ENCODE measurements at regions of chr17 and their contacts with region 1.

Region 1: GRCh38 chr17:6913608-6914443 is 82.0 kb upstream of the ALOX12 start:
- DNase-seq: no peak
- H3K4me3 ChIP-seq: no peak overlapping the region
- H3K27me3 ChIP-seq: peaks cover 9% of the 10 kb centered on the region
- CTCF ChIP-seq: peak; percentile 80

Region 2: DNA sequence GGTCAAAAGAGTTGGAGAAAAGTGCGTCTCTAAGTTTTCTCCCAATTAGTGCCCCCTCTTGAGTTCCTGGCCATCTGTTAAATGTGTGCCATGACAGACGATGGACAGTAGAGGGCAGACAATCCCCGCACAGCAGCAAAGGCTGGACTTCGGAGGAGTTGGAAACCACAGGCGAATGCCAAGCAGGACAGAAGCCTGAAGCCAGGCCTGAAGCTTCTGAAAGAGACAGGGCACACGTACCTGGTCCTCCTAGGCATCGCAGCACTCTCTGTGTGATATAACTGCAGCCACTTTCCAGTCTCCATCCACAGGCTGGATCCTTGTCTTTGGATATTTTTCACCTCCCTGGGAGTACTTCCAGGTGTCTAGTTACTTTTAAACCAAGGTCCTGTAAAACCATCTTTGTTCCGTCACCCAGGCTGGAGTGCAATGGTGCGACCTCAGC is 247.7 kb before region 1 on chr17:
- CTCF ChIA-PET with region 1: interaction called, 11 read pairs
- POLR2A ChIA-PET with region 1: no interaction called
- DNase-seq: peak; percentile 25
- H3K4me3 ChIP-seq: no peak overlapping the region
- H3K27me3 ChIP-seq: peaks cover 25% of the 10 kb centered on the region
- CTCF ChIP-seq: peak; percentile 93

Region 3: DNA sequence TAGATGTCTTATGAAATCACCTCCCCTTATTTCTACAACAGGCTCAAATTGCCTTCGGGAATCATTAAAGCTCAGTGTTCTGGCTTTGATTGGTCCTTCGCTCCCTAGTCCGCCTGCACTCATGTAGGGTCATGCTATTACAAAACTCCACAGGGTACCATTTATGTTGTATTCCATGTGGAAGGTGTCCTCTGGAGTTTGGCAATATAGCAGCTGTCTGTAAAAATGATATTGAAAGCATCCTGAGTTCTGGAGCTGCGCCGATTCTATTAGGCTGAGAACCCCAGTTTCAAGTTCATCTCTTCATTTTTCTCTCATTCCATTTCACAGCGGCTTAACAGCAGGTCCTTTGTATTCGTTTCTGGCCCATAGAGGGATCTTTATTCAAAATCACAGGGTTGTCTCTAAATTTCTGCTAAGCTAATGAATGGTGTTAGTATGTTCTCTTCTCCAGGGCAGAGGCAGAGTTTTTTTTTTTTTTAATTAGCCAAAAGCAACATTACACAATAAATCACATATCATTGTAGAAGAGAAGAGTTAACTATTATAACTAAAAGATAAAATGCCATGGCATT is 10.4 kb before region 1 on chr17:
- CTCF ChIA-PET with region 1: interaction called, 11 read pairs
- POLR2A ChIA-PET with region 1: no interaction called
- DNase-seq: no peak
- H3K4me3 ChIP-seq: no peak overlapping the region
- H3K27me3 ChIP-seq: no peaks in the 10 kb centered on the region; the same call in 1 of the 2 replicates
- CTCF ChIP-seq: no peak

Region 4: GRCh38 chr17:6986676-6987075 is 72.8 kb after region 1 on chr17:
- CTCF ChIA-PET with region 1: interaction called, 16 read pairs
- POLR2A ChIA-PET with region 1: no interaction called
- DNase-seq: no peak
- H3K4me3 ChIP-seq: no peak overlapping the region
- H3K27me3 ChIP-seq: no peaks in the 10 kb centered on the region
- CTCF ChIP-seq: no peak

Region 5: GRCh38 chr17:7004398-7005253 is 90.8 kb after region 1 on chr17:
- CTCF ChIA-PET with region 1: interaction called, 183 read pairs
- POLR2A ChIA-PET with region 1: no interaction called
- DNase-seq: no peak
- H3K4me3 ChIP-seq: no peak overlapping the region
- H3K27me3 ChIP-seq: no peaks in the 10 kb centered on the region
- CTCF ChIP-seq: peak; percentile 67

Region 6: GRCh38 chr17:7064261-7064660 is 150.4 kb after region 1 on chr17:
- CTCF ChIA-PET with region 1: no interaction called
- POLR2A ChIA-PET with region 1: no interaction called
- DNase-seq: no peak
- H3K4me3 ChIP-seq: no peak overlapping the region
- H3K27me3 ChIP-seq: peaks cover 4% of the 10 kb centered on the region; the same call in 1 of the 2 replicates
- CTCF ChIP-seq: no peak

Measured in BJ (cell line).